Activated naive CD4-positive, alpha-beta T cell treated with anti-CD3 and anti-CD28 coated beads for 36 hours (primary cell): ENCODE measurements at regions of chr1 and their contacts with region 1.

Region 1: GRCh38 chr1:227946624-227947385 is 927 bp downstream of the WNT9A start:
- DNase-seq: peak; percentile 69
- H3K4me3 Mint-ChIP-seq: peak overlapping the region; percentile 63
- H3K27ac Mint-ChIP-seq: no peak overlapping the region
- H3K4me1 Mint-ChIP-seq: peaks cover 5% of the 10 kb centered on the region
- H3K27me3 Mint-ChIP-seq: peaks cover 7% of the 10 kb centered on the region

Region 2: GRCh38 chr1:227486559-227486958 is 460.2 kb before region 1 on chr1:
- CTCF ChIA-PET with region 1: no interaction called
- intact Hi-C with region 1: loop called (anchors 1 kb)
- DNase-seq: no peak
- H3K4me3 Mint-ChIP-seq: no peak overlapping the region
- H3K27ac Mint-ChIP-seq: no peak overlapping the region
- H3K4me1 Mint-ChIP-seq: no peaks in the 10 kb centered on the region
- H3K27me3 Mint-ChIP-seq: no peaks in the 10 kb centered on the region

Region 3: DNA sequence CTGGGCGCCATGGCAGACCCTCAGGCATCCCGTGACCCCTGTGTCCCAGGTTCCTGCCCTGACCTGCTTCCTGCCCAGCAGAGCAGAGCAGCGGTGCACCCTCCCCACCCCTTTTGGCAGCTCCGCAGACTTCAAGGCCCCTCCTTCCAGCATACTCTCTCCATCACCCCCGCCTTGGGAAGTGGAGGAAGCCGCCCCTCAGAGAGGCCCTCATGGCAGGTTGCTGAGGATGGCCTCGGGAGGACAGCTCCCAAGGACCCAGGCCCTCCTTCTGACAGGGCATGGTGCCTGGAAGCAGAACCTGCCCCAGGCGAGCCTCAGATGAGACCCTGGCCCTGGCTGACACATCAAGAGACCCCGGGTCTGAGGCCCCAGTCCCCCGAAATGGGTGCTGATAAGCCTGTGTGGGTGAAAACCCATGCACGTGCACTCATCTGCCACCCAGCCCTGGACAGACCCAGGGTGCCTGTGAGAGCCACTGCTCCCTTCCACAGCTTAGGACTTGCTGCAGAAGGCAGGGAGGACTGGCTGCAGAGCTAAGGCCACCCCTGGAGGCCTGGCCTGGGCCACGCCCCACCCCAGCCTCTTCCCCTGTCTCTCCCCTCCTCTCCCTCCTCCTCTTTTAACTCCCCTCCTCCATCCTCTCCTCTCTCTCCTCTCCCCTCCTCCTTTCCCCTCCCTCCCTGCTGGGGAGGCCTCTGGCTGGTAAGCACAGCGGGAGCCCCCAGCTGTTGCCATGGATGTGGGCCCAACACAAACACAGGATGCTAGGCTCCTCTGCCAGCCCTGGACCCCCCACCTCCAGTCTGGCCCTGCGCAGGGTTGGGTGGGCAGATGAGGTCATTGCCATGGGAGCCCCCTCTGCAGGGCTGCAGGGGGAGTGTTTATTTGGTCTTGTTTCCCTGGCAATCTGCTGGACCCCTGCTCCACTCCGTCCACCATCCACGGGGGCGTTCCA is 32.8 kb before region 1 on chr1:
- CTCF ChIA-PET with region 1: no interaction called
- intact Hi-C with region 1: no loop called
- DNase-seq: no peak
- H3K4me3 Mint-ChIP-seq: no peak overlapping the region
- H3K27ac Mint-ChIP-seq: no peak overlapping the region
- H3K4me1 Mint-ChIP-seq: peaks cover 2% of the 10 kb centered on the region
- H3K27me3 Mint-ChIP-seq: no peaks in the 10 kb centered on the region

Region 4: DNA sequence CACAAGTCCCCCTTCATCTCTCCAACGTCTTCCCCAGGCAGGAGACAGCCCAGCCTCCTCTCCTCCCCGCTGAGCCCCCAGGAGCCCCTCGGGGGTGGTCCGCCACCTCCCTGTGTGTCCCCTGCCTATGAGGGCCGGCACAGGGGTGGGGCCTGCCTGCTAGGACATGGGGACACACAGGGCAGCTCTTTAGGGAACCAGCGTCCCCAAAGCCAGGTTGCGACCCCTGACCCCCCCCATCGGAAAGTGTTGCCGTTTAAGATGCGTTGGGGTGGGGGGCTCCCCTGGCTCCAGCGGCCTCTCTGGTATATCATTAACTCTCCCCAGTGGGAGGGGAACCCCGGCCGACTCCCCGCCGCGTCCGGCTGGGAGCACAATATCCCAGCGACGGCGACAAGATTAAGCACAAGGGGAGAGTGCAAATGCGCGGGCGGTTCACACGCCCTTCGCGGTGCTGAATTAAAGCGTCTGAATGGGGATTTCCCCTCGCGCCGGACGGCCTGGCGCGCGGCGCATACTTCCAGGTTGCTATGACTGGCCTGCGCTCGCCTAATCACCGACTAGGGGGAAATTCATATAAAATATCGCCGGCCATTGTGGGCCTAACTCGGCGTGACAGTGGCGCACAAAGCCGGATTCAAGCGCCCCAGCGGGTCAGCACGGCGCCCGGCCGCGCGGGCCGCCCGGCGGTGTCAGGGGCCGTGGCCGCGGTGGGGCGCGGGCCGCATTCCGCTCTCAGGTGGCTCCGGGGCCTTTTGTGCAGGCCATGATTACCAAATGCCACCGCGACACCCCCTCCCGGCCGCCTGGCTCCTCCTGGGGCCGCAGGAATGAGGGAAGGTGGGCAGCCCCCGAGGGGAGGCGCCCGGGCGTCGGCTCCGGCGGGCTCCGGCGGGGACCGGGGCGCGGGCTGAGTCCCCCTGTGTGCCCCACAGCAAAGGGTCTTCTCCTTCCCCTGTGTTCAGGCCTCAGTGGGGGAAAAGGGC is 90.9 kb after region 1 on chr1:
- CTCF ChIA-PET with region 1: no interaction called
- intact Hi-C with region 1: no loop called
- DNase-seq: peak; percentile 68
- H3K4me3 Mint-ChIP-seq: peak overlapping the region; percentile 19
- H3K27ac Mint-ChIP-seq: no peak overlapping the region
- H3K4me1 Mint-ChIP-seq: no peaks in the 10 kb centered on the region
- H3K27me3 Mint-ChIP-seq: peaks cover 28% of the 10 kb centered on the region